Activated CD4-positive, alpha-beta T cell treated with anti-CD3 and anti-CD28 coated beads, Interleukin-2, amount 10 ng/mL, durations not matched to agents 7 days and 5 days (primary cell): ENCODE measurements at regions of chr17 and their contacts with region 1.

Region 1: GRCh38 chr17:76246080-76247066 is 6.1 kb upstream of the RNF157 start:
- DNase-seq: peak; percentile 86
- H3K4me3 Mint-ChIP-seq: peak overlapping the region; percentile 62
- H3K27ac Mint-ChIP-seq: peak overlapping the region; percentile 92
- H3K4me1 Mint-ChIP-seq: peaks cover 86% of the 10 kb centered on the region
- H3K27me3 Mint-ChIP-seq: no peaks in the 10 kb centered on the region

Region 2: DNA sequence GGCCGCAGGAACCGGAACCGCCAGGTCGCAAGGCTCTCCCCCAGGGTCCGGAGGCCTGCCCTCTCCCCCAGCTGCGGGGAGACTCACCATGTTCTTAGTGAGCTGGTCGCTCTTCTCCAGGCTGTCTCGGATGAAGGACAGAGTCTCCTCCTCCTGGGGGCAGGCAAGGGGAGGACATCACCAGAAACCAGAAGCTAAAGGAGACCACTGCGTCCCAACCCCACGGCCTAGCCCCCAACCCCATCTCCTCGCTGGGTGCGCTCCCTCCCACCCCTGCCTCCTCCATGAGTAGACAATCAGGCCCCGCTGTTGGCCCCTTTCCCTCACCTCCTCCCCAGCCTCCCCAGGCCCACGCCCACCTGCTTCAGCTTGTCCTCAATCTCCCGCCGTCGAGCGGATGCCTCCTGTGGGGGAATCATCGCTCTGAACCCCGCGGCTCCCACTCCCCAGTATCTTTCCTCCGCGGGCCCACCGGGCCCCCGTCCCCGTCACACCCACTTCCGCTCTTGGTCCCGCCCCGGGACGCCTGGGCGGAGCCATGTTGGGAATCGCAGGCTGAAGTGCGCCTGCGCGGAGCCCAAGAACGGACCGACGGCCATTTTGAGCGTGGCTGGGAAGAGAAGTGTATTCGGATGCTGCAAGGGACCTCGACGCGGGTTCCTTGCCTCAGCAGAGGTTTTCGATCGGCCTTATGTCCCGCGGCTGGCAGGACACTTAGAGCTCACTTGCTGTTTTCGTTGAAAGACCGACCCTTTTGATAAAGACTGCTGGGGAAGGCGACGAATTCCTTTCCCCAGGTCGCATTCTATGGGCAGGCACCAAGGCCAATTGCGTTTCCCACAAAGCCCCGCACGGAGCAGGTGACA is 142.9 kb before region 1 on chr17 and contains the start of gene EXOC7:
- CTCF ChIA-PET with region 1: no interaction called
- POLR2A ChIA-PET with region 1: interaction called, 12 read pairs
- DNase-seq: peak; percentile 93
- H3K4me3 Mint-ChIP-seq: peak within 1 kb of the TSS; percentile 96
- H3K27ac Mint-ChIP-seq: peak within 1 kb of the TSS; percentile 96
- H3K4me1 Mint-ChIP-seq: peaks cover 32% of the 10 kb centered on the region
- H3K27me3 Mint-ChIP-seq: no peaks in the 10 kb centered on the region
- total RNA-seq, gene EXOC7: 140 to 147 TPM

Region 3: GRCh38 chr17:76147211-76148014 is 99.0 kb before region 1 on chr17:
- CTCF ChIA-PET with region 1: no interaction called
- POLR2A ChIA-PET with region 1: no interaction called
- DNase-seq: no peak
- H3K4me3 Mint-ChIP-seq: no peak overlapping the region
- H3K27ac Mint-ChIP-seq: peak overlapping the region; percentile 94
- H3K4me1 Mint-ChIP-seq: peaks cover 73% of the 10 kb centered on the region
- H3K27me3 Mint-ChIP-seq: no peaks in the 10 kb centered on the region

Region 4: DNA sequence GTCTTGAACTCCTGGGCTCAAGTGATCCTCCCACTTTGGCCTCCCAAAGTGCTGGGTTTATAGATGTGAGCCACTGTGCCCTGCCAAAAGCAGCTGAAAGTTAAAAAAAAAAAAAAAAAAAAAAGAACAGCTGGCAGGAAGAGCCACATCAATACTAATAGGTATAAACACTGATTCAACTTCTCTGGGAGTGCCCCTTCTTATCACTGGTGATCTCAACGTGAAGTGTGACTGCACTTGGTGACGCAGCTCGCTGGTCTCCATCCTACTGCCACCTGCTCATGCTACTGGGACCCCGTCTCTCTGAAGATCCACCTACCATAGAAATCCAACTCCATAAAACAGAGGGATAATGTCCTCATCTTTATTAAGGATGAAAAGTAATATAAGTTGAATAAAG is 46.9 kb before region 1 on chr17:
- CTCF ChIA-PET with region 1: interaction called, 11 read pairs
- POLR2A ChIA-PET with region 1: no interaction called
- DNase-seq: peak; percentile 68
- H3K4me3 Mint-ChIP-seq: peak overlapping the region; percentile 43
- H3K27ac Mint-ChIP-seq: peak overlapping the region; percentile 95
- H3K4me1 Mint-ChIP-seq: peaks cover 79% of the 10 kb centered on the region
- H3K27me3 Mint-ChIP-seq: no peaks in the 10 kb centered on the region